ENCODE measurements at regions of chr2 and their contacts with region 1.

Region 1: GRCh38 chr2:64250751-64251403 is 106.7 kb upstream of the PELI1 start:
- DNase-seq: peak; percentile 33
- ATAC-seq: peak; percentile 52
- H3K4me3 Mint-ChIP-seq: peak overlapping the region; percentile 97
- H3K27ac Mint-ChIP-seq: peak overlapping the region; percentile 93
- H3K4me1 Mint-ChIP-seq: peaks cover 64% of the 10 kb centered on the region
- H3K27me3 Mint-ChIP-seq: no peaks in the 10 kb centered on the region
- CTCF ChIP-seq: no peak

Region 2: GRCh38 chr2:64228126-64228678 is 22.7 kb before region 1 on chr2:
- CTCF ChIA-PET with region 1: interaction called, 10 read pairs
- POLR2A ChIA-PET with region 1: interaction called, 8 read pairs
- DNase-seq: peak; percentile 93
- ATAC-seq: peak; percentile 98
- H3K4me3 Mint-ChIP-seq: peak overlapping the region; percentile 82
- H3K27ac Mint-ChIP-seq: peak overlapping the region; percentile 99
- H3K4me1 Mint-ChIP-seq: peaks cover 50% of the 10 kb centered on the region
- H3K27me3 Mint-ChIP-seq: no peaks in the 10 kb centered on the region; the same call in 1 of the 2 replicates
- CTCF ChIP-seq: no peak

Region 3: DNA sequence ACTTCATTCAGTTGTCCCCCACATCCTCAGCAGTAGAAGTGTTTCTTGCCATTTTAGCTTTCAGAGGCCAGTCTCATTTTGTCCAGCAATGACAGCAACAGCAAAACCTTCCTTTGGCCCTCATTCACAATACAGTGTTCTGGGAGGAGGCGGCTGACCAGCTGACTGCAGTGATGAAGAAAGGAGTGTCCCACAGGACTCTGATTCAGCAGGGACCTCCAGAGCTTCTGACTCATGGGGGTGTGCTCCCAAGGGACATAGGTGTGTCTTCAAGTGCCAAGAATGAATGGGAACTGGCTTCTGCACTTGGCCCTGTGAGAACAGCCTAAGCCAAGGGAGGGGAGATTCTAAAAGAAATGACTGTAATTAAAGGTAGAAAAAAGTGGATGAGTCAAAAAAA is 40.3 kb after region 1 on chr2:
- CTCF ChIA-PET with region 1: no interaction called
- POLR2A ChIA-PET with region 1: no interaction called
- DNase-seq: no peak
- ATAC-seq: no peak
- H3K4me3 Mint-ChIP-seq: no peak overlapping the region
- H3K27ac Mint-ChIP-seq: no peak overlapping the region
- H3K4me1 Mint-ChIP-seq: peaks cover 41% of the 10 kb centered on the region
- H3K27me3 Mint-ChIP-seq: peaks cover 7% of the 10 kb centered on the region
- CTCF ChIP-seq: no peak

Region 4: DNA sequence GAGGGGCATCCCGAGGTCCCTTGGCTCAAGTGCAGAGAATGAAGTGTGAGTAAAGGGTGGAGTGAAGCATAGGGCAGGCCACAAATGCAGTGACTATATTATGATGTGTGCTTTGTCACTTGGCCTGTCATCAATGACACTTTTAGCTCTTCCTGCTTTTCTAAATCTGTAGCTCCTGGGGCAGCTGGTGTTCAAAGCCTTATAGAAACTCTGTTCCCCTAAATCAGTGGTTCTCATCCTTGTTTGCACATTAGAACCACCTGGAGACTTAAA is 67.5 kb after region 1 on chr2:
- CTCF ChIA-PET with region 1: no interaction called
- POLR2A ChIA-PET with region 1: no interaction called
- DNase-seq: no peak
- ATAC-seq: no peak
- H3K4me3 Mint-ChIP-seq: no peak overlapping the region
- H3K27ac Mint-ChIP-seq: no peak overlapping the region
- H3K4me1 Mint-ChIP-seq: peaks cover 15% of the 10 kb centered on the region
- H3K27me3 Mint-ChIP-seq: peaks cover 10% of the 10 kb centered on the region
- CTCF ChIP-seq: no peak